ENCODE measurements at regions of chr11 and their contacts with region 1.

Region 1: GRCh38 chr11:18526521-18527296 is at the start of gene TSG101:
- ATAC-seq: peak; percentile 91 to 99 (median 98)
- H3K4me3 ChIP-seq: peak within 1 kb of the TSS; percentile 58 to 83 (median 77)
- H3K27ac ChIP-seq: peak within 1 kb of the TSS; percentile 90 to 94
- H3K4me1 ChIP-seq: peaks cover 10 to 13% of the 10 kb centered on the region in 2 donors
- total RNA-seq, gene TSG101: 57.3 to 100 (median 86.0) TPM

Region 2: DNA sequence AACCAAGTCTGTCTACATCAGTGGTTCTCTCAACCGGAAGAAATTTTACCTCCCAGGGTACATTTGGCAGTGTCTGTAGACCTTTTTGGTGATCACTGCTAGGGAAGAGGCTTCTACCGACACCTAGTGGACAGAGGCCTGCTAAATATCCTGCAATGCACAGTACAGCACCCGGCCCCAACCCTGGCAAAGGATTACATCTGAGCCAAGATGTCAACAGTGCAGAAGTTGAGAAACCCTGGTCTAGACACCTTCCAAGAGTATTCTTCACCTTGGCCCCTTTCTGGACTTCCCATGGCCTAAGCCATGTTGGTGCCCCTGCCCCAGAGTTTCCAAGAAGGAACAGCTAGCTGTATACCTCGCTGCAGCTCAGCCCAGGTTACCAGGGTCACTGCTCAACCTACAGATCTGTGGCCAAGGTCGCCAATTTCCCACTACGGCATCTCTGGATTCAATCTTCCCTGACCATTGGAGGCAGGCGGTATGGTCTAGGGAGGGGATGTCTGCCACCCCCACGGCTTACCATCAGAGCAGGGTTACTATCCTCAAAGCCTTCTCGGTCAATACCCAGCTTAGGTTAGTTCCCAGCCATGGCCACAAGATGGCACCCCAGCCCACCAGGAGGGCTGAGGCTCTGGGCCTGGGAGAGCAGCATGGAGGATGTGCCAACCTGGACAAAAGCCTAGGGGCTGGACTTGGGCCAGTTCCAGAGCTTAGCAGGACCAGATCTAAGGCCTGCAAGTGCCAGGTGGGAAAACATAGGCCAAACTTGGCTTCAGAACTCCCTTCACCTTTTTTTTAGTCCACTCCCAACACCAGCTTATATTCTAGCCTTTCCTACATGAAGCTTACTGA is 795.9 kb before region 1 on chr11:
- in situ Hi-C with region 1: no loop called
- ATAC-seq: peak; percentile 54 to 73 (median 65)
- H3K4me3 ChIP-seq: no peak overlapping the region
- H3K27ac ChIP-seq: no peak overlapping the region
- H3K4me1 ChIP-seq: peaks cover 0 to under 1% of the 10 kb centered on the region in 2 donors

Region 3: GRCh38 chr11:18634140-18635032 is 107.7 kb after region 1 on chr11 and contains the start of gene SPTY2D1:
- in situ Hi-C with region 1: loop called in 1 of 9 experiments (anchors 25 kb)
- ATAC-seq: peak; percentile 94 to 96 (median 95)
- H3K4me3 ChIP-seq: peak within 1 kb of the TSS; percentile 45 to 78 (median 69)
- H3K27ac ChIP-seq: peak within 1 kb of the TSS; percentile 99
- H3K4me1 ChIP-seq: peaks cover 5% of the 10 kb centered on the region in 2 donors
- total RNA-seq, gene SPTY2D1: 11.2 to 27.0 (median 16.5) TPM

Region 4: DNA sequence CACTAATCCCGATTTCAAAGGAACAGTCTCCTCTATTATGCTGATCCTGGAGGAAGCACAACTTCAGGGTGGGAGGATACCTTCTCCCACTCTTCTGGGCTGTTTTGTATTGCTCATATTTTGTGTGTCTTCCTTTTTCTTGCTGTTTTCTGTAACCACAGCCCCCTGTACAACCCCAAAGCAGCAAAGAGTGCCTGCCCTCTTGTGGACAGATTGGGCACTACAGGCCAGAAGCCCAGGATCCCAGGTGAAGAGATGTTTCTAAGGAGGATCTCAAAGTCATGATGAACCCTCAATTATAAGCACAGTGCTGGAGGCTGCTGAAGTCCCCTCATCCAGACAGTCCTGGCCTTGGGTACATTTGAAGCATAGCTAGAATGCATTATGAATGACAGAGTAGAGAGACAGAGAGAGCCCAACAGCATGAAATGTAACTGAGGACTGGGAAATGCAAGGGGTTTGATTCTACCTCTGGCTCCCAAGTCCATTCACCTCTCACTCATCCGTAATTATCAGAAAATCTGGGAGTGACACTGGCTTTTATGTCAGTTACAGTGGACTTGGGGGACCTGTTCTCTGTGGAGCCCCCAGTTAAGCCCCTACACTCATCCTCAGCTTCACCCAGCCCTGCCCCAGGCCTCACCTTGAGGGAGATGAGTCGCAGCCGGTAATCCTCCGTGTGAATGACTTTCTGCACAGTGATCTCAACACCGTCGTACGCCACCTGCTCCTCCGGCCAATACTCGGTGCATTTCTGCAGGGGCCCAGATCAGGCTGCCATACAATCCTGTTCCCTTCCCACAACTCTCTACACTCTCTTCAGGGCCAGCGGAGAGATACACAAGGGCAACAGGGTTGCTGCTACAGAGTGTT is 205.5 kb after region 1 on chr11:
- in situ Hi-C with region 1: loop called in 2 of 9 experiments (anchors 25 kb)
- ATAC-seq: peak; percentile 59 to 93 (median 86)
- H3K4me3 ChIP-seq: no peak overlapping the region
- H3K27ac ChIP-seq: no peak overlapping the region
- H3K4me1 ChIP-seq: no peaks in the 10 kb centered on the region

Measured in motor neuron (in vitro differentiated cells).